ENCODE measurements at regions of chr14 and their contacts with region 1.

Region 1: GRCh38 chr14:24442273-24443052 is at the start of gene SDR39U1:
- DNase-seq: peak; percentile 99
- H3K4me3 Mint-ChIP-seq: peak within 1 kb of the TSS; percentile 89
- H3K27ac Mint-ChIP-seq: peak within 1 kb of the TSS; percentile 98
- H3K4me1 Mint-ChIP-seq: peaks cover 39% of the 10 kb centered on the region
- H3K27me3 Mint-ChIP-seq: no peaks in the 10 kb centered on the region
- total RNA-seq, gene SDR39U1: 70.5 to 72.4 TPM

Region 2: DNA sequence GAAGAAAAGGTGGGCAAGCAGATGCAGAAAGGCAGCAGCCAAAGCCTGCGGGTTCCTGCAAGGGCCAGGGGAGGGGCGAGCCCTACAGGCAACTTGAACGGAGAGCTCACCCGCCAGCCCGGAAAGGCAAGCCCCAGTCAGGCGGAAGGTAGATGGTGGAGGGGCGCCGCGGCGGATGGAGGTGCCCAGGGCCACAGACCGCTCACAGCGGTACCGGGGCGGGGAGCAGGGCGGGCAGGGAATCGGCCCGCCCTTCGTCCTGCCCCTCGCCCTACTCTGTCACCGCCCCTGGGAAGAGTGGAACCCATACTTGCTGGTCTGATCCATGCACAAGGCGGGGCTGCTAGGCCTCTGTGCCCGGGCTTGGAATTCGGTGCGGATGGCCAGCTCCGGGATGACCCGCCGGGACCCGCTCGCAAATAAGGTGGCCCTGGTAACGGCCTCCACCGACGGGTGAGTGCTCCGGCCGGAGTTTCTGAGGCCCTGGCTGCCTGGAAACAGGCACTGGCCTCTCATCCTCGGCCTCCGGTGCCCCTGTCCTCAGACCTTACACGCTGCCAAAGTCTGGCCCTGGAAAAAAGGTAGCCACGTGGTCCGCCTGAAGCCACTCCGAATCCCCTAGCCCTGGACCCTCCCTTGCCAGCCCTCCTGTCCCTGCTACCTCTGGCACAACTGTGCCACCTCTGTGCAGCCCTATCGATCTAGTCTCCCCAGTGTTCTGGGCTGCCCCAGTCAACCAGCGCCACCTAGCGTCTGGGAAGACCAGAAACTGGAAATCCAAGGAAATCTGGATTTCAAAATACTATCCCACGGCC is 488.8 kb before region 1 on chr14 and contains the start of gene DHRS4:
- CTCF ChIA-PET with region 1: no interaction called
- intact Hi-C with region 1: loop called (anchors 1 kb)
- DNase-seq: peak; percentile 87
- H3K4me3 Mint-ChIP-seq: peak within 1 kb of the TSS; percentile 99
- H3K27ac Mint-ChIP-seq: peak within 1 kb of the TSS; percentile 94
- H3K4me1 Mint-ChIP-seq: peaks cover 22% of the 10 kb centered on the region
- H3K27me3 Mint-ChIP-seq: no peaks in the 10 kb centered on the region
- total RNA-seq, gene DHRS4: 22.8 to 24.0 TPM

Region 3: GRCh38 chr14:24141097-24141880 is 301.2 kb before region 1 on chr14 and contains the start of gene EMC9:
- CTCF ChIA-PET with region 1: no interaction called
- intact Hi-C with region 1: loop called (anchors 1 kb)
- DNase-seq: peak; percentile 100
- H3K4me3 Mint-ChIP-seq: peak within 1 kb of the TSS; percentile 99
- H3K27ac Mint-ChIP-seq: peak within 1 kb of the TSS; percentile 93
- H3K4me1 Mint-ChIP-seq: peaks cover 73% of the 10 kb centered on the region
- H3K27me3 Mint-ChIP-seq: no peaks in the 10 kb centered on the region
- total RNA-seq, gene EMC9: 38.4 to 38.9 TPM

Region 4: DNA sequence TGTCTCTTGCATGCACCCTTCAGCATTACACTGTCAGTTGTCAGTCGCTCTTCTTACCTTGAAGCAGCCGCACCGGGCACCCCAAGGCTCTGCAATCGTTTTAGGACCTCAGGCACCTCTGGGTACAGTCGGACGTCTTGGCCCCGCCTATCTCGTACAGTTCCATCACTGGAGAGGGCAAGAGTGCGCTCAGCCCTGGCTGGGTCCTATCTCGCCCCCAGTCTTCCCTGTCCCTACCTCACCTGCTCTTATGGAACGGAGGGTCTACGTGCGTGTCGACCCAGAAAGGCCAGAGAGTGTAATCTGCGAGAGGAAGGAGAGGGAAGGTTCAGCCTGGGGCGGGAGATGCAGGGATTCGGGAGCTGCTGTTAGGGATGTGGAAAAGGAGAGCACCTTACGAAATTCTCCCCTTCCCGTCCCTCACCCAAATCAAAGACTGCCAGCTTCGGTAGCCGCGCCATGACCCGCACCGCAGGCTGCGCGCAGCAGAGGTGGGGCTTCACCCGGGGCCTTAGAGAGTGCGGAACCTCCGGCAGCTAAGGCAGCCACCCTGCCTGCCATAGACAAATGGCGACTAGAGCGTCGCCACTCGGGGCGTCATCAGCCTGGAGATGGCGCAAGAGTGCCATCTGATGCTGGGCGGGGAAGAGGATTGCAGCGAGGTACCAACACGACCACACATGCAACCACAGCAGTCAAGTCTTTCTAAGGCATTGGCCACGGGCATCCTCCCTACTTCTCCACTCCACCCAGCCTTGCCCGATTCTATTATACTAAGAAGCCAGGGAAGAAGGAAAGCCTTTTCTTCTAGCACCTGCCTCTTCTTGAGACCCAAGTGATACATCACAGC is 226.7 kb before region 1 on chr14 and contains the start of gene MDP1:
- CTCF ChIA-PET with region 1: interaction called, 3 read pairs
- intact Hi-C with region 1: loop called (anchors 1 kb)
- DNase-seq: peak; percentile 93
- H3K4me3 Mint-ChIP-seq: peak within 1 kb of the TSS; percentile 86
- H3K27ac Mint-ChIP-seq: peak within 1 kb of the TSS; percentile 96
- H3K4me1 Mint-ChIP-seq: peaks cover 45% of the 10 kb centered on the region
- H3K27me3 Mint-ChIP-seq: no peaks in the 10 kb centered on the region
- total RNA-seq, gene MDP1: 10.2 to 13.6 TPM

Region 5: DNA sequence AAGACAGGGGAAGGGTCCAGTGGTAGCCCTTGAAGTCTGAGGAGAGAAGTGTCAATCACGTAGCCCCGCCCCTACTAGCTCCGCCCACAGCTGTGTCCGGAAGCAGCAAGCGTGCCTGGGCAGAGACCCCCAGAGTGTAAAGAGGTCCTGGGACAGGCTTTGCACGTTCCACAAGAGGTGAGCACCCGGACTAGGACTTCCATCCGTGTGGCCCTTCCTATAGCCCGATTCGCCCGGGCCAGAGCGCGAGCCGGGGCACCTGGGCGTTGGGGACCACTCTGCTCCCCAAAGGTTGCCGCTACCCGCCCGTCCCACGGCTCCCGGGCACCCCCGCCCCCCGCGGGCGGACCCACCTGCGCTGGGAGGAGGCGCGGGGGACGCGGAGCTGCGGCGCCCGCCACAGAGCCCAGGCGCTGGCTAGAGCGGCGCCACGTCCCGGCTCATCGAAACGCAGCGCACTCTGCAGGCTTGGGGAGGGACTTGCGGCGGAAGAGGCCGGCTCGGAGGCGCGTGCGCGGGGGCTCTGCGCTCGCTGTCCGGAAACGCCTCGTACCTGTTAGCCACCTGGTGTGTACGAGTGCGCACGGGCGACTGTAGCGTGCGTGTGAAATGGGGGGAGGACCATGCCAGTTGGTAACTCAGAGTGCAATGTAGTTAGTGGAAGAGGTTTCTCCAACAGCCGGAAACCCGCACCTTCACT is 171.2 kb before region 1 on chr14 and contains the start of gene RABGGTA:
- CTCF ChIA-PET with region 1: no interaction called
- intact Hi-C with region 1: loop called (anchors 1 kb)
- DNase-seq: peak; percentile 94
- H3K4me3 Mint-ChIP-seq: peak within 1 kb of the TSS; percentile 78
- H3K27ac Mint-ChIP-seq: peak within 1 kb of the TSS; percentile 95
- H3K4me1 Mint-ChIP-seq: peaks cover 43% of the 10 kb centered on the region
- H3K27me3 Mint-ChIP-seq: no peaks in the 10 kb centered on the region
- total RNA-seq, gene RABGGTA: 74.9 to 76.2 TPM

Region 6: GRCh38 chr14:24463017-24463883 is 20.8 kb after region 1 on chr14:
- CTCF ChIA-PET with region 1: no interaction called
- intact Hi-C with region 1: loop called (anchors 1 kb)
- DNase-seq: no peak
- H3K4me3 Mint-ChIP-seq: no peak overlapping the region
- H3K27ac Mint-ChIP-seq: peak overlapping the region; percentile 67
- H3K4me1 Mint-ChIP-seq: peaks cover 35% of the 10 kb centered on the region
- H3K27me3 Mint-ChIP-seq: no peaks in the 10 kb centered on the region

Region 7: DNA sequence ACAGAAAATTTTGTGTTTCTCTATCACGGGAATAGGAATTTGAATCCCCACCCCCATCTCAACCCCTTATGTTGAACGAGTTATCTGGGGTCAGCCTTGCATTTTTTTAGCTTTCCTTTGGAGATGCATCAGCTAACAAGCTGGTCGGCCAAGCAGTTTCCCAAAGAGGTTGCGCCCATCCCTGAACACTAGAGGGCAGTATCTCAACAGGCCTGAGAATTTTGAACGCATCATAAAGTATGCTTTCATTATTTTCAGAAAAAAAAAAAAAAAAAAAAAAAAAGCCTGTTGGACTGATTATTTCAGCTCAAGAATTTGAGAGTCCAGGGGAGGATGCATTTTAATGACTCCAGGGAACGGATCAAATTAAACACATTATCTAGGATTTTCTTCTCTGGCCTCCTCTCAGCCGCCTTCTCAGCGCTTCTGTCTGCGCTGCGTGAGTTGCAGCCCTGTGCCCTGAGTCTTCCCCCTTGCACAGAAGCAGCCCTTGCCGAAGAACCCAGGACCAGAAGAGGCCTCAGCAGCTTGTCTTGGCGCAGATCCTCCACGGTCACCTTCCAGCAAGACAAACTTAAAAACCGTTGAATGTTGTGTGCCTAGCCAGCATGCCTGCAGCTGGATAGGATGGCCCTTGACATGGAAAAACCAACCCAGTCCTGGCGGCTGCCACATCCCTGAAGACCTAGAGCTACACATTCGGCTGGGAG is 268.1 kb after region 1 on chr14:
- CTCF ChIA-PET with region 1: no interaction called
- intact Hi-C with region 1: no loop called
- DNase-seq: peak; percentile 77
- H3K4me3 Mint-ChIP-seq: no peak overlapping the region
- H3K27ac Mint-ChIP-seq: no peak overlapping the region
- H3K4me1 Mint-ChIP-seq: no peaks in the 10 kb centered on the region
- H3K27me3 Mint-ChIP-seq: no peaks in the 10 kb centered on the region

Measured in activated naive CD4-positive, alpha-beta T cell treated with anti-CD3 and anti-CD28 coated beads for 36 hours (primary cell).